Heart left ventricle (tissue), 16 donors: ENCODE measurements at regions of chr4 and their contacts with region 1.

Region 1: GRCh38 chr4:163484906-163485305 is 9.6 kb upstream of the TMA16 start:
- DNase-seq: peak in 3 of 5 donors; percentile 18 to 36 (median 30)
- ATAC-seq: no peak
- H3K4me3 ChIP-seq: no peak overlapping the region
- H3K27ac ChIP-seq: no peak overlapping the region
- H3K4me1 ChIP-seq: peaks cover 0 to 20% (median 0%) of the 10 kb centered on the region in 12 donors
- H3K27me3 ChIP-seq: no peaks in the 10 kb centered on the region
- CTCF ChIP-seq: peak; percentile 33 to 68 (median 54)
- POLR2A ChIP-seq: no peak

Region 2: DNA sequence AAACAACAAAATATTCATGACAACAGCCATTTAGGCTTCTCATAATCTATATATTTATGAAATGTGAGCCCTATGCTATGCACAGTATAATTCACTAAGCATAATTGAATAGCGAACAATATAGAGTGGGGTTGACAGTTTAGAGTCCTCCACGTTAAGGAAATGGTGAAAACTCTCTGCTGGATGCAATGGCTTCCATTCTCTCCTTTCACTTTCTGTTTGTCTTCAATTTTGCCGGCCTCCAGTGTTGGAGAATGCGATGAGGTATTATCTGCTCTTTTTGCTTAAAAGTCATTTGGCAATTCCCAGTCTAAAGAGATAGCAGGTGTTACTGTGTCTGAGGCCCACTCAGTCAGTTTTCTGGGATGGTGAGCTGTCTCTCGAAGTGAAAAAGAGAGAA is 89.1 kb before region 1 on chr4:
- intact Hi-C with region 1: no loop called
- DNase-seq: no peak
- ATAC-seq: no peak
- H3K4me3 ChIP-seq: peak overlapping the region in 8 of 12 donors; percentile 11 to 48 (median 25)
- H3K27ac ChIP-seq: peak overlapping the region in 3 of 12 donors; percentile 13 to 23 (median 18)
- H3K4me1 ChIP-seq: peaks cover 0 to 6% (median 0%) of the 10 kb centered on the region in 12 donors
- H3K27me3 ChIP-seq: no peaks in the 10 kb centered on the region
- CTCF ChIP-seq: no peak
- POLR2A ChIP-seq: no peak

Region 3: GRCh38 chr4:163415668-163416067 is 69.2 kb before region 1 on chr4:
- intact Hi-C with region 1: no loop called
- DNase-seq: no peak
- ATAC-seq: no peak
- H3K4me3 ChIP-seq: no peak overlapping the region
- H3K27ac ChIP-seq: no peak overlapping the region
- H3K4me1 ChIP-seq: no peaks in the 10 kb centered on the region
- H3K27me3 ChIP-seq: no peaks in the 10 kb centered on the region
- CTCF ChIP-seq: no peak
- POLR2A ChIP-seq: no peak

Region 4: GRCh38 chr4:163448516-163449197 is 36.2 kb before region 1 on chr4:
- intact Hi-C with region 1: no loop called
- DNase-seq: no peak
- ATAC-seq: no peak
- H3K4me3 ChIP-seq: no peak overlapping the region
- H3K27ac ChIP-seq: no peak overlapping the region
- H3K4me1 ChIP-seq: peaks cover 0 to 6% (median 0%) of the 10 kb centered on the region in 12 donors
- H3K27me3 ChIP-seq: no peaks in the 10 kb centered on the region
- CTCF ChIP-seq: no peak
- POLR2A ChIP-seq: no peak

Region 5: GRCh38 chr4:163681208-163681821 is 196.4 kb after region 1 on chr4:
- intact Hi-C with region 1: loop called in 1 of 10 experiments (anchors 5 kb)
- DNase-seq: no peak
- ATAC-seq: no peak
- H3K4me3 ChIP-seq: no peak overlapping the region
- H3K27ac ChIP-seq: no peak overlapping the region
- H3K4me1 ChIP-seq: no peaks in the 10 kb centered on the region
- H3K27me3 ChIP-seq: no peaks in the 10 kb centered on the region
- CTCF ChIP-seq: peak; percentile 23 to 66 (median 48)
- POLR2A ChIP-seq: no peak

Region 6: GRCh38 chr4:164731827-164732474 is 1247.0 kb after region 1 on chr4:
- intact Hi-C with region 1: loop called in 1 of 10 experiments (anchors 5 kb)
- DNase-seq: peak in 4 of 5 donors; percentile 11 to 42 (median 31)
- ATAC-seq: peak; percentile 57 to 74 (median 63)
- H3K4me3 ChIP-seq: no peak overlapping the region
- H3K27ac ChIP-seq: no peak overlapping the region
- H3K4me1 ChIP-seq: no peaks in the 10 kb centered on the region
- H3K27me3 ChIP-seq: no peaks in the 10 kb centered on the region
- CTCF ChIP-seq: peak; percentile 59 to 78 (median 74)
- POLR2A ChIP-seq: no peak